Thyroid gland (tissue), 4 donors: ENCODE measurements at regions of chr11 and their contacts with region 1.

Region 1: DNA sequence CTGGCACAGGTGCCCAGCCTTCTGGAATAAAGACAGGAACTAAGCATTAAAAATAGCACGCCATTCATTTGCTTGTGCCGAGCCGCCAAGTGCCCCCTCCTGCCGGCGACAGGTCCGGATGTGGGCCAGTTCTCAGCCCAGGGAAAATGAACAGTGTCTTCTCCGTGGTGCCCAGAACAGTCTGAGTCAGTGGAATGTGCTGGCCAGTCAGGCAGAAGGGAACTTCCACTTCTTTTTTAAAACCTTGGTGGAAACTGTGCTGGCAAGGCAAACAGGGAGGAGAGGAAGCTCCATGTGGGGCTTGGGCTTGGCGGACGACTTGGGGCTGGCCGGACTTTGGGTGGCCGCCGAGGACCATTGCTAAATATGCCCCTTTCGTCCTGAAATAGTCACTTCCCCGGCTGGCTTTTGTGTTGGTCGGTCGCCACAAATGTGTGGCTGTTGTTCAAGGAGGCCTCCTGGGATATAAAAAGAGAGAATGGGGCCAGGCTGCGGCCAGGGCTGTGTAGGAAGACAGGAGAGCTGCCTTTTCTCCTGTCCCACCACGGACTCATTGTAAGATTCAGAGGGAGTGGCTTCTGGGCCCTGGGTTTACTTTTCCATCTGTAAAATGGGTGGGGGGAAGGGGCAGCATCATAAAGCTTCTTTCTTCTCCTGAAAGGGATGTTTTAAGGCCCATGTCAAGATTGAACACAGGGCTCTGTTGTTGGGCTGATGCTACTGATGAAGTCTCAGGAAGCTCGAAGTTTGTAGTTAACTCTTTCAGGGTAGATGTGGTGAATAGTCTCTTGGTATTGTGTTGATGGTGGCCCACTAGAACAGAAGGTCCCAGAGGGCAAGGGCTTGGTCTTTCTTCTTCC is 101.0 kb downstream of the PTPRJ start:
- DNase-seq: peak; percentile 90 to 92
- H3K4me3 ChIP-seq: no peak overlapping the region
- H3K27ac ChIP-seq: peak overlapping the region; percentile 43 to 81 (median 80)
- H3K4me1 ChIP-seq: peaks cover 31 to 34% of the 10 kb centered on the region in 2 donors
- H3K27me3 ChIP-seq: no peaks in the 10 kb centered on the region
- CTCF ChIP-seq: no peak
- POLR2A ChIP-seq: peak in 1 of 2 donors; percentile 57

Region 2: GRCh38 chr11:47979378-47980244 is 101.8 kb before region 1 on chr11:
- intact Hi-C with region 1: loop called (anchors 10 kb)
- DNase-seq: peak; percentile 63 to 64
- H3K4me3 ChIP-seq: peak overlapping the region in 2 of 3 donors; percentile 12 to 85
- H3K27ac ChIP-seq: peak overlapping the region; percentile 97 to 99 (median 98)
- H3K4me1 ChIP-seq: peaks cover 38 to 44% of the 10 kb centered on the region in 2 donors
- H3K27me3 ChIP-seq: no peaks in the 10 kb centered on the region
- CTCF ChIP-seq: no peak
- POLR2A ChIP-seq: peak in 1 of 2 donors; percentile 40

Region 3: GRCh38 chr11:48028914-48029680 is 52.3 kb before region 1 on chr11:
- intact Hi-C with region 1: no loop called
- DNase-seq: no peak
- H3K4me3 ChIP-seq: no peak overlapping the region
- H3K27ac ChIP-seq: no peak overlapping the region
- H3K4me1 ChIP-seq: peaks cover 13 to 48% of the 10 kb centered on the region in 2 donors
- H3K27me3 ChIP-seq: no peaks in the 10 kb centered on the region
- CTCF ChIP-seq: no peak
- POLR2A ChIP-seq: no peak

Region 4: DNA sequence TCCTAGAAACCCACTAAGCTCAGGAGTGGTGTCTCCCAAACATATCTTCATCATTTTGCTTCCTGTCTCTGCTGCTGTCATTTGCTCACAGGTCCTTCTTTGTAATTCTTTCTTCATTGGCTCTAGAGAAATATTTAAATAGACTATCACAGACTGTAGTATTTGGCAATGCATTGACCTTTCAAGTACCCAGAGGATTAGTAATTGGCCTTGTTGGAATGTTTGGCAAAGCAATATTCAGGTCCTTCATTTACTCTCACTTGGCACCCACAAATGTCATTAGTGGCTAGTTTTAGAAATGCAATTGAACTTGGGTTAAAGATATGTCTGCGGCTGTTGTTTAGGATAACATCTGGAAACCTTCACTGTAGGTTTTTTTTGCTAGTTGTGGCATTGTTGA is 273.3 kb after region 1 on chr11:
- intact Hi-C with region 1: no loop called
- DNase-seq: no peak
- H3K4me3 ChIP-seq: no peak overlapping the region
- H3K27ac ChIP-seq: no peak overlapping the region
- H3K4me1 ChIP-seq: no peaks in the 10 kb centered on the region
- H3K27me3 ChIP-seq: no peaks in the 10 kb centered on the region
- CTCF ChIP-seq: no peak
- POLR2A ChIP-seq: no peak